ENCODE measurements at regions of chr7 and their contacts with region 1.

Region 1: DNA sequence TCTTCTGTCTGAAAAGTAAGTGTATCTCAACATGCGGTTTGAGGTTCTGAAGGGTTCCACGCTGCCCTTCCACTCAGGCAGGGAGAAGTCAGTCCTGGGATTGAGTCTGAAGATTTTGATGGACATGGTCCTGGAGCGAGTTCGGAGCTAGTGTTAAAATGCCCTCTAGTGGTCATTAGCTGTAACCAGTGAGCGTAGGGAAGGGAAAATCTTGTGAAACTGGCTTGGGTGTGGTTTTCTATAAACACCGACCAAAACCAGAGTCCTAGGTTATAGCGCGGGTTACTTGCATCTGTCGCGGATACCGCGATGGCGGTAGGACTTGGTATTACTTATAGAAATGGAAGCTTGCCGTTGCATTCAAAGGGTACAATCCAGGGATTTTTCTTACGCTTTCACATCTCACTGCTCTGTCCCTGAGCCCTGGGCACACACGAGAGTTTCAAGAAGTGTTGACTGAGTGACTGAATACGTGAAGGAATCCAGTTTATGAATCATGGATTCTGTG is 348.2 kb upstream of the C7orf33 start:
- DNase-seq: no peak
- ATAC-seq: peak; percentile 18
- H3K4me3 Mint-ChIP-seq: no peak overlapping the region
- H3K27ac Mint-ChIP-seq: no peak overlapping the region
- H3K4me1 Mint-ChIP-seq: peaks cover 5% of the 10 kb centered on the region
- H3K27me3 Mint-ChIP-seq: peaks cover 35% of the 10 kb centered on the region
- CTCF ChIP-seq: no peak

Region 2: DNA sequence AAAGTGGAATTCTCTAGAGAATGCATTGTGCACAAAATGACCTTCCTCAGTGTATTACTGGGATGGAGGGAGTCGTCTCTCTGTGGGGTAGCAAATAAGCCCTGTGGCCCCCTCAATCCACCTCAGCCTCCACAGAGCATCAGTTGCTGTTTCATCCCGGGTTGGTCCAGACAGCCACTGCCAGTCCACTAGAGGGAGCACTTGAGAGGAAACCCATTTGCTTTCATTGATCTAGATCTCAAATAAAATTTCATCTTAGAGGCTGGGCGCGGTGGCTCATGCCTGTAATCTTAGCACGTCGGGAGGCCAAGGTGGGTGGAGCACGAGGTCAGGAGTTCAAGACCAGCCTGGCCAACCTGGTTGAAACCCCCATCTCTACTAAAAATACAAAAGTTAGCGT is 997.1 kb before region 1 on chr7:
- CTCF ChIA-PET with region 1: no interaction called
- POLR2A ChIA-PET with region 1: no interaction called
- intact Hi-C with region 1: loop called (anchors 5 kb)
- DNase-seq: no peak
- ATAC-seq: no peak
- H3K4me3 Mint-ChIP-seq: no peak overlapping the region
- H3K27ac Mint-ChIP-seq: no peak overlapping the region
- H3K4me1 Mint-ChIP-seq: peaks cover 2% of the 10 kb centered on the region
- H3K27me3 Mint-ChIP-seq: no peaks in the 10 kb centered on the region
- CTCF ChIP-seq: no peak

Region 3: DNA sequence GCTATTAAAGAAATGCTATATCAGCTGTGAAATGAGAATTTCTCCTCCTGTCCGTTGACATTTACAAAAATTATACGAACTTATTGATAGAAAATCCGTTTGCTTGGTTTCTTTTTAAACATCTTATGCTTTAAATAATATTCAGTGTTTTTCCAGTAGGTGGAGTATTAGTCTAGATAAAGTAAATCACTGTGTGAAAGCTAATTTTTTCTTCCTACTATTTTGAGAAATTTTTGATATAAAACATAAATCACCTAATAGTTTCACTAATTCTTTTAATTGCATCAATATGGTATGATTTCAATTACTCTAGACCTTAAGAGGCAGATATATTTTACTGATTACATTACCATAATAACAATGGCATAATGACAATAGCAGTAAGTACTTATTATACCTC is 13.0 kb after region 1 on chr7:
- CTCF ChIA-PET with region 1: interaction called, 10 read pairs
- POLR2A ChIA-PET with region 1: no interaction called
- intact Hi-C with region 1: no loop called
- DNase-seq: no peak
- ATAC-seq: no peak
- H3K4me3 Mint-ChIP-seq: no peak overlapping the region
- H3K27ac Mint-ChIP-seq: no peak overlapping the region
- H3K4me1 Mint-ChIP-seq: no peaks in the 10 kb centered on the region
- H3K27me3 Mint-ChIP-seq: peaks cover 22% of the 10 kb centered on the region
- CTCF ChIP-seq: no peak

Measured in activated B cell treated with CpG ODN at 0.5 μM for 24 hours (primary cell).